CD14-positive monocyte (primary cell): ENCODE measurements at regions of chr5 and their contacts with region 1.

Region 1: DNA sequence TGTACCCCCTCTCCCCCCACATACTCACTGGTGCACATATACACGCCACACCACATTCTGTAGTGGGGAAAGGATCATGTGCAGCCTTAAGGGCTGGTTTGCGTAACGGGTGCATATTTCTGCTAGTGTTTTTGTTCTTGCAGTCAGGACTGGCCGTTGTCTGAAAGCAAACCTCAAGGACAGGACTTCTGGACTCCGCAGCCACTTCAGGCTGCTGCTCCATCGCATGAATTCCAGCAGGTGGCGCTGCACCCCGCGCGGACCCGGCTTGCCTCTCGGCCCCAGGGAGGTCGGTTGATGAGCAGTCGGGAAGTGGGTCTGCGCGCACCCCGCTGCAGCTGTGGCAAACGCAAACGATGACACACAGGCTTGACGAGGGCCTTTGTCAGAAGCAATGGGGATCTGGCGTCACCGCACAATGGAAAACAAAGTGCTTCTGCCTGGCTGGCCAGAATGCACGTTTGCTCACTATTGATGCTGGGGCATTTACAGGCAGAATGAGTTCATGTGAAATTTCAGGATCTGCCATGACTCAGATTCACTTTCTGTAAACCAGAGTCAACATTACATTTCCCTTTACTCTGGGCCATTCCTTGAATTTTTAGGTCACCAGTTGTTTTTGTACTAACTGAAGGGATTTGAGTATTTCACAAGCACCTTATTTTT is 36.3 kb upstream of the GLRX start:
- DNase-seq: peak; percentile 96 to 99 (median 97)
- H3K4me3 ChIP-seq: no peak overlapping the region
- H3K4me3 Mint-ChIP-seq: peak overlapping the region; percentile 47 to 82
- H3K27ac ChIP-seq: peak overlapping the region in 1 of 2 donors; percentile 33
- H3K27ac Mint-ChIP-seq: peak overlapping the region; percentile 54 to 97 (median 87)
- H3K4me1 ChIP-seq: peaks cover 46 to 51% of the 10 kb centered on the region in 2 donors
- H3K4me1 Mint-ChIP-seq: peaks cover 55% of the 10 kb centered on the region
- H3K27me3 ChIP-seq: no peaks in the 10 kb centered on the region
- H3K27me3 Mint-ChIP-seq: peaks cover 4 to 5% (median 4%) of the 10 kb centered on the region in 3 donors
- CTCF ChIP-seq: peak; percentile 91

Region 2: DNA sequence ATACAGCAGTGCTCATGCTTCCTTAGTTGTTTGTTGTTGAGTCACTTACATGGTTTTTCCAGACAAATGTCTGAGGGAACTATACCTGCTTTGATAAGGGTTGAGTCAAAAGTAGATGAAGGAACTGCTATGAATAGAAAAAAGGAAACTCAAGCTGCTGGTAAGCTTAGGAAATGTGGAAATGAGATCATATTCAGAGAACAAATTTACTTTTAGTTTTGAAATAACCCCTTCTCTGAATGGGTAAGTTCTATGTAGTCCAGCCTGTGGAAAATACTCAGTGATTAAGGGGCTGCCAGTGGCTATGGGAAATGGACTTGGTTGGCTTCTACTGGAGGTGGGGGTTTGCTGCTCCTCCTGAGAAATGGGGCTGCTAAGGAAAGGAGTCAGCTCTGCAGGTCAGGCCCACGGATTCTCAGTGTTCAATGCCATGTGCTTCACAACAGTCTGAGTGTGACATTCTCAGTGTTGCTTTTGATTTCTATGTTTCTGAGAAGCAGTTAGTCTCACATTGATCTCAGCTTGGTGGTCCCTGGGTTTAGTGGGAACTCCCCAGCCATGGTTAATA is 11.4 kb after region 1 on chr5:
- intact Hi-C with region 1: loop called in 1 of 2 experiments (anchors 1 kb)
- DNase-seq: peak; percentile 54 to 87 (median 76)
- H3K4me3 ChIP-seq: peak overlapping the region in 2 of 3 experiments; percentile 31 to 62
- H3K4me3 Mint-ChIP-seq: peak overlapping the region; percentile 67 to 79
- H3K27ac ChIP-seq: peak overlapping the region; percentile 74 to 87
- H3K27ac Mint-ChIP-seq: peak overlapping the region; percentile 94 to 98 (median 97)
- H3K4me1 ChIP-seq: peaks cover 45 to 56% of the 10 kb centered on the region in 2 donors
- H3K4me1 Mint-ChIP-seq: peaks cover 63% of the 10 kb centered on the region
- H3K27me3 ChIP-seq: no peaks in the 10 kb centered on the region
- H3K27me3 Mint-ChIP-seq: peaks cover 0 to 5% (median 3%) of the 10 kb centered on the region in 3 donors
- CTCF ChIP-seq: no peak

Region 3: DNA sequence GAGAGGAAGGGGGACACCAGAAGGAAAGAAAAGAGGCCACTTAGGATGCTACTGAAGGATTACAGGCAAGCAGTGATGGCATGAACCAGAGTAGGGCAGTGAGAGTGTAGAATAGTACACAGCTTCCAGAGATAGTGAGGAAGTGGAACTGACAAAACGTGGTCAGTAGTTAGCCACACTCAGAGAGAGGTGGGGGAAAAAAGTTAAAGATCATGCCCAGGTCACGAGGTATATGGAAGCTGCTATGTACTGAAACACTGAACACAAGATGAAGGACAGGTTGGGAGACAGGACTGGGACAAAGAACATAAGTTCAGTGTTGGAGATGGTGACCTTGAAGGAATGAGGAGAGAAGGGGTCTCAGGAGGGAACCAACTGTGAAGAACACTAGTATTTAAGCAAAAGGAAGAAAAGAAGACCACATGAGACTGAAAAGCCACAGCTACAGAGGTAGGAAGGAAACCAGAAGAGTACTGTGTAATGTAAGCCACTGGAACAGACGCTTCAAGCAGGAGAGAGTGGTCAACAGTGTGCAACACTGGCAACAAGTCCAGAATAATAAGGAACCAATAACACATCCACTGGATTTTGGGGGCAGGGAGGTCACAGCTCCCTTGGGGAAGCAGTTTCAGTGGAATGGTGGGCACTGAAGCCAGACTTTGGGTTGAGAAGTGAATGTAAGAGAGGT is 57.3 kb after region 1 on chr5:
- intact Hi-C with region 1: loop called (anchors 5 kb)
- DNase-seq: peak; percentile 27 to 44 (median 43)
- H3K4me3 ChIP-seq: peak overlapping the region in 1 of 3 experiments; percentile 23
- H3K4me3 Mint-ChIP-seq: peak overlapping the region in 1 of 2 donors; percentile 43
- H3K27ac ChIP-seq: peak overlapping the region in 1 of 2 donors; percentile 51
- H3K27ac Mint-ChIP-seq: peak overlapping the region; percentile 10 to 74 (median 65)
- H3K4me1 ChIP-seq: peaks cover 41 to 55% of the 10 kb centered on the region in 2 donors
- H3K4me1 Mint-ChIP-seq: peaks cover 54% of the 10 kb centered on the region
- H3K27me3 ChIP-seq: no peaks in the 10 kb centered on the region
- H3K27me3 Mint-ChIP-seq: peaks cover 0 to 1% (median 0%) of the 10 kb centered on the region in 3 donors
- CTCF ChIP-seq: no peak

Region 4: DNA sequence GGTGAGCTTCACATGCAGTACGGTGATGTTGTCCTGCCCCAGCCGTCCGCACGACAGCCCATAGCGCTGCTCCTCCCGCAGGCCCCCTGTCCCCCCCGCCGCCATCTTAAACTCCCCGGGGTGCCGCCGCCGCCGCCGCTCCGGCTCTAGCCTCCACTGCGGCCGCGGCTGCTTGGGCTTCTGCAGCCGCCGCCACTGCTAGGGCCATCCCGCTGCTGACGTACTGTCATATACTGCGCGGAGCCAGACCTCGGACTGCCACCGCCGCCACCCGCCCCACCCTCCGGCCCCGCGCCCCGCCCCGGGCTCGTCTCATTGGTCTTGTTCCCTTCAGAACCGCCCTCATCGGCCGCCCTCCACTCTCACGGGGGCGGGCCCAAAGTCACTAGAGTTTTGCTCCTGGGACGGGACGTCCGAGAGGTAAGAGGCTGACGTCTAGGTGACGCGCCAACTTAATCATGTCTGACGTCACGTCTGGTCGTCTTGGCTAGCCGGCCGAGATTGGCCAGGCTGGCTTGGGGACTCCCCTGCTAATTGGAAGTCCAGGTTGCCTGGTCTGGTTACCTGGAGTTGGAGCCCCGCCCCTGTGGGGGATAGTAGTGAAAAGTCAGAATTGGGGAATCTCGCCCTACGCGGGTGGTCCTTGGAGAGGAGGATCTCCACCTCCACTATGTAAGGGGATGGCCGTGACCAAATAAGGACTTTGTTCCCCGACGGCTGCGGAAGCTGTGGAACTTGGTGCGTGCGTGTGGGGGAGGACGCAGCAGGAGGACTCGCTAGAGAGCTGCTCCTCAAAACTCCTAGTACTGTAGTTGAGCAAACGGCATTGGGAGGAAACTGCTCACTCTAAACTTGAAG is 103.1 kb after region 1 on chr5 and contains the start of gene ELL2:
- intact Hi-C with region 1: loop called (anchors 5 kb)
- DNase-seq: peak; percentile 99 to 100 (median 100)
- H3K4me3 ChIP-seq: peak within 1 kb of the TSS; percentile 44 to 95 (median 75)
- H3K4me3 Mint-ChIP-seq: peak within 1 kb of the TSS; percentile 99
- H3K27ac ChIP-seq: peak within 1 kb of the TSS; percentile 85 to 92
- H3K27ac Mint-ChIP-seq: peak within 1 kb of the TSS; percentile 94 to 99 (median 98)
- H3K4me1 ChIP-seq: peaks cover 34 to 36% of the 10 kb centered on the region in 2 donors
- H3K4me1 Mint-ChIP-seq: peaks cover 43% of the 10 kb centered on the region
- H3K27me3 ChIP-seq: no peaks in the 10 kb centered on the region
- H3K27me3 Mint-ChIP-seq: peaks cover 5 to 28% (median 15%) of the 10 kb centered on the region in 3 donors
- CTCF ChIP-seq: no peak
- polyA plus RNA-seq, gene ELL2: 3.1 to 8.1 (median 5.8) TPM

Region 5: GRCh38 chr5:96146675-96147074 is 287.9 kb after region 1 on chr5:
- intact Hi-C with region 1: loop called in 1 of 2 experiments (anchors 10 kb)
- DNase-seq: peak; percentile 82 to 94 (median 88)
- H3K4me3 ChIP-seq: no peak overlapping the region
- H3K4me3 Mint-ChIP-seq: no peak overlapping the region
- H3K27ac ChIP-seq: peak overlapping the region in 1 of 2 donors; percentile 20
- H3K27ac Mint-ChIP-seq: peak overlapping the region; percentile 11 to 79 (median 56)
- H3K4me1 ChIP-seq: peaks cover 20 to 24% of the 10 kb centered on the region in 2 donors
- H3K4me1 Mint-ChIP-seq: peaks cover 28% of the 10 kb centered on the region
- H3K27me3 ChIP-seq: no peaks in the 10 kb centered on the region
- H3K27me3 Mint-ChIP-seq: peaks cover 0 to 3% (median 0%) of the 10 kb centered on the region in 3 donors
- CTCF ChIP-seq: no peak

Region 6: DNA sequence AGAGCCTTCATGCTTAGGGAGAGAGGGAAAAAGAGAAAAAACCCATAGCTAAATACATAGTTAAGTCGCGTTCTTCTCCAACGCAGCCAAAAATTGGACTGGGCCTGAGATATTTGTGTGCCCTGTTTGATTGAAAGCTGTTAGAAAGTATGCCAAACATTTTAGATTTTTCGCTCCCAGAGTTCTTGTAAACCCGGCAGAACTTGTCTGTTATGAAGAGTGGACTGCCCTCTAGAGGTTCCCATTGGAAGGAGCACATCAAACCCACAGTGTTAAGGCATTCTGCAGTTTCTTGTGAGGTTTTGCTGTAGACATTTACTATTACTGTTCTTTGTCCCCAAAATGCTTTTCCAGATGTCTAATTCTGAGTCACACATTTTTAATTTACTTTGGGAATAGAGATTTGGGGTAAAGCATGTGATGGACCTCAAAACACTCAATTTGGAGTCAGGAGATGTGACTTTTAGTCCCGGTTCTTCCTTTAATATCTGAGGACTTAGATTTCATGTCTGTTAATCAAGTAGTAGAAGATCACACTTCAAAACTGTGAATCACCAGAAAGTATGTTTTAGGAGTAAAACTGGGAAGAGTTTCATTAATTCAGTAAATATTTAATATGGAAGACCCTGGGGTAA is 477.7 kb after region 1 on chr5:
- intact Hi-C with region 1: loop called (anchors 2 to 5 kb)
- DNase-seq: peak; percentile 60 to 78 (median 75)
- H3K4me3 ChIP-seq: no peak overlapping the region
- H3K4me3 Mint-ChIP-seq: peak overlapping the region in 1 of 2 donors; percentile 36
- H3K27ac ChIP-seq: peak overlapping the region in 1 of 2 donors; percentile 58
- H3K27ac Mint-ChIP-seq: no peak overlapping the region
- H3K4me1 ChIP-seq: peaks cover 31 to 42% of the 10 kb centered on the region in 2 donors
- H3K4me1 Mint-ChIP-seq: peaks cover 36% of the 10 kb centered on the region
- H3K27me3 ChIP-seq: no peaks in the 10 kb centered on the region
- H3K27me3 Mint-ChIP-seq: peaks cover 0 to 1% (median 0%) of the 10 kb centered on the region in 3 donors
- CTCF ChIP-seq: peak; percentile 92

Region 7: GRCh38 chr5:96601811-96602244 is 743.0 kb after region 1 on chr5:
- intact Hi-C with region 1: loop called in 1 of 2 experiments (anchors 5 kb)
- DNase-seq: peak; percentile 46 to 72 (median 55)
- H3K4me3 ChIP-seq: no peak overlapping the region
- H3K4me3 Mint-ChIP-seq: no peak overlapping the region
- H3K27ac ChIP-seq: no peak overlapping the region
- H3K27ac Mint-ChIP-seq: peak overlapping the region in 1 of 7 donors; percentile 24
- H3K4me1 ChIP-seq: peaks cover 0 to 1% of the 10 kb centered on the region in 2 donors
- H3K4me1 Mint-ChIP-seq: peaks cover 1% of the 10 kb centered on the region
- H3K27me3 ChIP-seq: peaks cover 13 to 14% of the 10 kb centered on the region in 2 donors
- H3K27me3 Mint-ChIP-seq: peaks cover 4 to 13% (median 7%) of the 10 kb centered on the region in 3 donors
- CTCF ChIP-seq: peak; percentile 86